ENCODE measurements at regions of chr11 and their contacts with region 1.

Region 1: DNA sequence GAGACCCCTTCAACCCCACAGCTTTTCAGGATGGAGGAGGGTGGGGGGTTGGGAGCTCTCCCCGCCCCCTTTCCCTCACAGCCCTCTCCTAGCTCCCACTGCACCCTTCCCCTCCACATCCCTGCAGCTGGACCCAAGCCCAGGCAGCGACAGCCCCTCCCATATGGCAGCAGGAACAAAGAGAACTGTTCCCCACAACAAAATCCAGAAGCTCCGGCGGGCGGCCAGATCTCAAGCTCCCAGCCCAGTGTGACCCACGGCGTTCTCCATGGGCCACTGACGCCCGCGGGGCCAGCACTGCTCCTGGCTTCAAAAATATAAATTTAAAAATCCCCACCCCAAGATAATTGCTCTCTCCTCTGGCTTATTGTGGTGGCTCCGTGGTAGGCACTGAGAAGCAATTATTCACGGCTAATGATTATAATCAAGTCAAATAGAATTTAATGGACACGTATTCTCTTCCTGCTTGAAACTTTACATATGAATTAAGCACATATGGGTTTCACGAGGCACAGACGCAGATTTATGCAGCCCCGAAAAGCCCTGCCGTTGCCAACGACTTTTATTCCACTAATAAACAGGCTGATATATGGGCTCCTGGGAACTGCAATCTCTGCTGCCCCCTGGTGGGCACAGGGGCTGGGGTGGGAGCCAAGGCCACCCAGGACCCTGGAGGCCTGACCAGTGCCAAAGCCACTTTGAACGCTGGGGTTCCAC is 17.6 kb downstream of the MACROD1 start:
- DNase-seq: peak; percentile 44
- H3K4me3 Mint-ChIP-seq: no peak overlapping the region
- H3K27ac Mint-ChIP-seq: no peak overlapping the region
- H3K4me1 Mint-ChIP-seq: peaks cover 13% of the 10 kb centered on the region
- H3K27me3 Mint-ChIP-seq: no peaks in the 10 kb centered on the region

Region 2: DNA sequence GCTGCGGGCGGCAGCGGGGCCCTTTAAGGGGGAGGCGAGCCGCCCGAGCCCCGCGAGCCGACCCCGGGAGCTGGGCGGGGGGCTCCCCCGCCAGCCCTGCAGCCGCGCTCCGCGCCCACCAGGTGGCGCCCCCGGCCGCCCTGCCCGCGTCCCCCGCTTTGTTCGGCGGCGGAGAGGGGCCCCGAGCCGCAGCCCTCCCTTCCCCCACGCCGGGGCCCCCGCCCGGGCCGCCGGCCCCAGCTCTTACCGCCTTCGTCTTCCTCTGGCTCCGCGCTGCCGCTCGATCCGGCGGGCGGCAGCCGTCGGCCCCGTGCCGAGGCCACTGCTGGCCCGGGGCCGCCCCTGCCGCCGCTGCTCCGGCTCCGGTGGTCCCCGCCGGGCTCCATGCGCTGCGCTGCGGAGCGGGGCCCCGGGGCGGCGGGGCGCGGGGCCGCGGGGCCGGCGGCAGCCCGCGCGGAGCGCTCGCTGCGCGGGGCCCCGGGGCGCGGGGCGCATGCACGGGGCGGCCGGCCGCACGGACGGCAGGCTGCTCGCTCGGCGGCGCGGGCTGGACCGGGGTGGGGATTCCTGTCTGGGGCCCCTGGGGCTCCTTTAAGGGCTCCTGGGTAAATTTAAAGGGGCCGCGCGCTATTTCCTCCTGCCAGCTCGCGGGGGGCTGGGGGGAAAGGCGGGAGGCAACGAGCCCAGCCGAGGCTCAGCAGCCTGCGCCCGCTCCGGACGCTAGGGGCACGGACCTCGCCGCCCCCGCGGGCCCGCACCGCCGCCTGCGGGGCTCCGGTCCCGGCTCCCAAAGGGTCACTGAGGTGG is 379.9 kb before region 1 on chr11 and contains the start of gene ZFTA:
- intact Hi-C with region 1: loop called (anchors 5 kb)
- DNase-seq: peak; percentile 43
- H3K4me3 Mint-ChIP-seq: peak within 1 kb of the TSS; percentile 86
- H3K27ac Mint-ChIP-seq: peak within 1 kb of the TSS; percentile 24
- H3K4me1 Mint-ChIP-seq: peaks cover 12% of the 10 kb centered on the region
- H3K27me3 Mint-ChIP-seq: peaks cover 29% of the 10 kb centered on the region
- total RNA-seq, gene ZFTA: 7.0 and 8.9 TPM in 2 replicates

Region 3: DNA sequence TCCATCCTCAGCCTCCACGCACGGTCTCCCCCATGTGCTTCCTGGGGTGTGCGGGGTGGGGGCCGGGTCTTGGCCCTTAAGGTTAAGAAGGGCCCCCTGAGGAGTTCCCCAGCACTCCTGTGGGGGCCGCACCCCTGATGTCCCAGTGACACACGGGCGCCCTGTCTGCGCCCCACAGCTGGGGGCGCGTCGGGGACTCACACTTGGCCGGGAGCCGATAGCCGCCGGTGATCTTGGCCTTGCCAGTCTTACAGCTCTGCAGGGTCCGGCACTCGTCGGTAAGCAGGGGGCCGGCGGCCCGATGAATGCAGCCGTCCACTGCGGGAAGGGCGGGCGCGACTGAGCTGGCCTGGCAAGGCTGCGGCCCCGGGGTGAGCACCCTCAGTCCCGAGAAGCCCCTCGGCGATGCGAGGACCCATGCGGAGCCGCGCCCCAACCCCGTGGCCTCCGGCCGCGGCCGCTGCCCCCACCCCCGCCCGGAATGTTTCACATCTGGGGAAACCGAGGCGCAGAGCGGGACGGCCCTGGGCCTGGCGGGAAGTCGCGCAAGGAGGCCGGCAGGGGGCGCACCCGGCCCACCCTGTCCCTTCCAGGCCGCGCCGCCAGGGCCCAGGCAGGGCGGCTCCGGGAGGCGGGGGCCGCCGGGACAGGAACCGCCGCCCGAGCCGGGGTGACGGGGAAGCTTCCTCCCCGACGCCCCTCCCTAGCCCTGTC is 148.2 kb before region 1 on chr11:
- intact Hi-C with region 1: loop called (anchors 1 kb)
- DNase-seq: peak; percentile 73
- H3K4me3 Mint-ChIP-seq: no peak overlapping the region
- H3K27ac Mint-ChIP-seq: no peak overlapping the region
- H3K4me1 Mint-ChIP-seq: peaks cover 2% of the 10 kb centered on the region
- H3K27me3 Mint-ChIP-seq: peaks cover 2% of the 10 kb centered on the region

Region 4: DNA sequence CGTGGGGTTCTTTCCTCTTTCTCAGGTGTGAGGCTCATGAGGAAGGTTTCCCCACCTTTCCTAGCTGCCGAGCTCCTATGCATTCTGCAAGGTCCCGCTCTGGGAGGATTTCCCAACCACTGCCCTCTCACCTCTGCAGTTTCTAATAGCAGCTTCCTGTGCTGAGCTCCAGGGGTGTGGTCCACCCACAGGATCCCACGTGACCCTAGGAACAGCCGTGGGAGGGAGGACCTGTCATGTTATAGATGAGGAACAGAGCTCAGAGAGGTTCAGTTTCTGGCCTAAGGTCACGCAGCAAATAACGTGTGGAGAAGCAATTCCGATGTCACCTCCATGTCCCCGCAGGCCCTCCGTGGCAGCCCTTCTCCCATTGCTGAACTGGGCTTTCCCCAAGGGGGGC is 74.1 kb before region 1 on chr11:
- intact Hi-C with region 1: no loop called
- DNase-seq: peak; percentile 16
- H3K4me3 Mint-ChIP-seq: no peak overlapping the region
- H3K27ac Mint-ChIP-seq: no peak overlapping the region
- H3K4me1 Mint-ChIP-seq: peaks cover 3% of the 10 kb centered on the region
- H3K27me3 Mint-ChIP-seq: no peaks in the 10 kb centered on the region